Naive thymus-derived CD4-positive, alpha-beta T cell (primary cell): ENCODE measurements at regions of chr16 and their contacts with region 1.

Region 1: DNA sequence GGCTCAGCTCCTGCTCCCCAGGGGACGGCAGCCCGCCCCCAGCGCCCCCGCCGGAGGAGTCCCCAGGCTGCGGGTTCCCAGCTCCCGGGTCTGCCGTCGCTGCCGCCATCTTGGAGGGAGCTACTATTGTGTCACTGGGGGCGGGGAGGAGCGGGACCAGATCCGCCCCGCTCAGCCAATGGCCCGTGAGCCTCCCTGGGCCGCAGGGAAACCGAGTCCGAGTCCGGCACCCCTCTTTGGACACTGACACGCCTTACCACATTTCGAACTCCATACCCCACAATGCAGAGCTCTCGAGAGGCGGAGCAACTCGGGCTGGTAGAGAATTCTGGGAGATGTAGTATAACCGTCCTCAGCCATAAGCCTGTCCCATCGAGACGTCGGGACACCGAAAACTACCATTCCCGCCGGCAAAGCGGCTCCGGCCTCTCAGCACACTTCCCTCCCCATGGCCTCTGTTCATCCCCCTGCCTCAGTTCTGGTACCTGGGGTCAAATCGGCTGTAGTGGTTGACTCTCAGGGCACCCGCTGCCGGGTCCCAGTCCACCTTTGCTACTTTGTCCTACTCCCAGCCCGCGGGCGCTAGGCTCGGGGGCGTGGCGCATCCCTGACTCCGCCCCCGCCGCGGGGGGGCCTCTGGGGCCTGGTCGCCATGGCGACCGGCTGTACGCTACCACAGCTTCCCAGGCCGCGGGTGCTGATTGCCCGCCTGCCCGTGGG is at the starts of genes RANBP10 and TSNAXIP1:
- DNase-seq: peak; percentile 91 to 99 (median 97)
- ATAC-seq: peak; percentile 96
- H3K4me3 ChIP-seq: peak within 1 kb of the TSS; percentile 88
- H3K4me3 Mint-ChIP-seq: peak within 1 kb of the TSS; percentile 75 to 97 (median 94)
- H3K27ac ChIP-seq: peak within 1 kb of the TSS; percentile 89
- H3K27ac Mint-ChIP-seq: peak within 1 kb of the TSS; percentile 74 to 97 (median 95)
- H3K4me1 ChIP-seq: peaks cover 29 to 43% of the 10 kb centered on the region in 2 donors
- H3K4me1 Mint-ChIP-seq: peaks cover 13 to 49% (median 42%) of the 10 kb centered on the region in 7 donors
- H3K27me3 ChIP-seq: no peaks in the 10 kb centered on the region
- H3K27me3 Mint-ChIP-seq: peaks cover 0 to under 1% (median 0%) of the 10 kb centered on the region in 5 donors
- total RNA-seq, gene RANBP10: 22.3 to 26.6 (median 24.7) TPM
- total RNA-seq, gene TSNAXIP1: 0.24 to 1.1 (median 0.54) TPM

Region 2: GRCh38 chr16:67660564-67661028 is 146.0 kb before region 1 on chr16 and contains the start of gene PARD6A:
- CTCF ChIA-PET with region 1: no interaction called
- POLR2A ChIA-PET with region 1: interaction called, 4 read pairs
- intact Hi-C with region 1: loop called (anchors 1 kb)
- DNase-seq: peak; percentile 81 to 95 (median 93)
- ATAC-seq: peak; percentile 89
- H3K4me3 ChIP-seq: peak within 1 kb of the TSS; percentile 99
- H3K4me3 Mint-ChIP-seq: peak within 1 kb of the TSS; percentile 90 to 97 (median 94)
- H3K27ac ChIP-seq: peak within 1 kb of the TSS; percentile 97
- H3K27ac Mint-ChIP-seq: peak within 1 kb of the TSS; percentile 84 to 98 (median 97)
- H3K4me1 ChIP-seq: peaks cover 11 to 17% of the 10 kb centered on the region in 2 donors
- H3K4me1 Mint-ChIP-seq: peaks cover 15 to 40% (median 22%) of the 10 kb centered on the region in 7 donors
- H3K27me3 ChIP-seq: no peaks in the 10 kb centered on the region
- H3K27me3 Mint-ChIP-seq: no peaks in the 10 kb centered on the region
- total RNA-seq, gene PARD6A: 4.5 to 11.2 (median 4.7) TPM

Region 3: GRCh38 chr16:67719048-67719777 is 87.4 kb before region 1 on chr16 and contains the start of gene GFOD2:
- CTCF ChIA-PET with region 1: no interaction called
- POLR2A ChIA-PET with region 1: interaction called, 9 read pairs
- intact Hi-C with region 1: loop called (anchors 1 kb)
- DNase-seq: peak; percentile 94 to 100 (median 96)
- ATAC-seq: peak; percentile 96
- H3K4me3 ChIP-seq: peak within 1 kb of the TSS; percentile 95
- H3K4me3 Mint-ChIP-seq: peak within 1 kb of the TSS; percentile 90 to 99 (median 94)
- H3K27ac ChIP-seq: peak within 1 kb of the TSS; percentile 88
- H3K27ac Mint-ChIP-seq: peak within 1 kb of the TSS; percentile 91 to 99 (median 98)
- H3K4me1 ChIP-seq: peaks cover 15 to 16% of the 10 kb centered on the region in 2 donors
- H3K4me1 Mint-ChIP-seq: peaks cover 19 to 51% (median 39%) of the 10 kb centered on the region in 7 donors
- H3K27me3 ChIP-seq: no peaks in the 10 kb centered on the region
- H3K27me3 Mint-ChIP-seq: no peaks in the 10 kb centered on the region
- total RNA-seq, gene GFOD2: 6.3 to 13.4 (median 11.4) TPM

Region 4: GRCh38 chr16:67872786-67873537 is 66.4 kb after region 1 on chr16 and contains the start of gene EDC4:
- CTCF ChIA-PET with region 1: no interaction called
- POLR2A ChIA-PET with region 1: interaction called, 4 read pairs
- intact Hi-C with region 1: loop called (anchors 1 to 2 kb)
- DNase-seq: peak; percentile 75 to 96 (median 83)
- ATAC-seq: peak; percentile 96
- H3K4me3 ChIP-seq: peak within 1 kb of the TSS; percentile 88
- H3K4me3 Mint-ChIP-seq: peak within 1 kb of the TSS; percentile 88 to 96 (median 94)
- H3K27ac ChIP-seq: peak within 1 kb of the TSS; percentile 91
- H3K27ac Mint-ChIP-seq: peak within 1 kb of the TSS; percentile 90 to 97 (median 92)
- H3K4me1 ChIP-seq: peaks cover 19 to 30% of the 10 kb centered on the region in 2 donors
- H3K4me1 Mint-ChIP-seq: peaks cover 25 to 41% (median 36%) of the 10 kb centered on the region in 7 donors
- H3K27me3 ChIP-seq: no peaks in the 10 kb centered on the region
- H3K27me3 Mint-ChIP-seq: no peaks in the 10 kb centered on the region
- total RNA-seq, gene EDC4: 103 to 166 (median 122) TPM

Region 5: DNA sequence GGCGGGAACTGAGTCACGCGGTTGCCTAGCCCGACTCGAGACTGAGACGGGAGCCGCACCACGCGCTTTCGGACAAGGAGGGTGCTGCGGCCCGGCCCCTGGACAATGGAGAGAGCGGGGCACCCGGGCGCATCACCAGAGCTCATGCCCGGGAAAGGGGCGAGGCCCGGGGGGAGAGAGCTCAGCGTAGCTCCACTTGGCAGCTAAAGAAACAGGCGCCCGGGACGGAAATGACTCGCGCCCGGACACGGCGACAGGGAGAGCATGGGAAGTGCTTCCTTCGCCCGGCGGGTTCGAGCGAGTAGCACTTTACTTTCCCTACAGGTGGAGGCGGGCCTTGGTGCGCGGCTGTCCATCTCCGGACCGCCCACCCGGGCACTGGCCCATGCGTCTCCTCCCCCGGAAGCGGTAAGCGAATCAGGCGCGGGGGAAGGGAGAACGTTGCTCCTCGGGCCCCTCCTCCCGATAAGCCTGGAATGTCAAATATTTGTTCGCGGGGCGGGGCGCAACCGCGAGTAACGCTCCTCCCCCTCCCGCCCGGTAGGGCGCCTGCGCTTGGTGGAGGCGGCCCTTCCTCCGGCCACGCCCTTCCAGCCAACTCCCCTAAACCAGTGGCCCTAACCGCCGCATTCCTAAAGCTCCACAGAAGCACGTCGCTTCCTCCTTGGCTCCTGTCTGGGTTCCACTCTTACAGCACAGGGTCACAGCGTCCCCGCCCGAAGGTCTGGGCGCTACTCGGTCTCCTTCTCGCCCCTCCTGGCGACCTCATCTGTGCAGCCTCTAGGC is 430.8 kb after region 1 on chr16:
- CTCF ChIA-PET with region 1: no interaction called
- POLR2A ChIA-PET with region 1: no interaction called
- intact Hi-C with region 1: loop called in 1 of 2 experiments (anchors 2 kb)
- DNase-seq: peak; percentile 71 to 90 (median 83)
- ATAC-seq: peak; percentile 88
- H3K4me3 ChIP-seq: peak overlapping the region; percentile 91
- H3K4me3 Mint-ChIP-seq: peak overlapping the region; percentile 90 to 99 (median 96)
- H3K27ac ChIP-seq: peak overlapping the region; percentile 67
- H3K27ac Mint-ChIP-seq: peak overlapping the region; percentile 72 to 95 (median 87)
- H3K4me1 ChIP-seq: peaks cover 6 to 10% of the 10 kb centered on the region in 2 donors
- H3K4me1 Mint-ChIP-seq: peaks cover 23 to 45% (median 34%) of the 10 kb centered on the region in 7 donors
- H3K27me3 ChIP-seq: no peaks in the 10 kb centered on the region
- H3K27me3 Mint-ChIP-seq: peaks cover 0 to 13% (median 0%) of the 10 kb centered on the region in 5 donors

Region 6: GRCh38 chr16:69386596-69386995 is 1580.0 kb after region 1 on chr16:
- CTCF ChIA-PET with region 1: no interaction called
- POLR2A ChIA-PET with region 1: no interaction called
- intact Hi-C with region 1: loop called in 1 of 2 experiments (anchors 5 kb)
- DNase-seq: no peak
- ATAC-seq: no peak
- H3K4me3 ChIP-seq: no peak overlapping the region
- H3K4me3 Mint-ChIP-seq: peak overlapping the region in 8 of 10 donors; percentile 86 to 96 (median 92)
- H3K27ac ChIP-seq: peak overlapping the region; percentile 95
- H3K27ac Mint-ChIP-seq: peak overlapping the region in 6 of 9 donors; percentile 90 to 99 (median 95)
- H3K4me1 ChIP-seq: peaks cover 10 to 27% of the 10 kb centered on the region in 2 donors
- H3K4me1 Mint-ChIP-seq: peaks cover 22 to 37% (median 35%) of the 10 kb centered on the region in 7 donors
- H3K27me3 ChIP-seq: no peaks in the 10 kb centered on the region
- H3K27me3 Mint-ChIP-seq: no peaks in the 10 kb centered on the region